Activated B cell treated with CpG ODN at 0.5 μM for 24 hours (primary cell): ENCODE measurements at regions of chr7 and their contacts with region 1.

Region 1: DNA sequence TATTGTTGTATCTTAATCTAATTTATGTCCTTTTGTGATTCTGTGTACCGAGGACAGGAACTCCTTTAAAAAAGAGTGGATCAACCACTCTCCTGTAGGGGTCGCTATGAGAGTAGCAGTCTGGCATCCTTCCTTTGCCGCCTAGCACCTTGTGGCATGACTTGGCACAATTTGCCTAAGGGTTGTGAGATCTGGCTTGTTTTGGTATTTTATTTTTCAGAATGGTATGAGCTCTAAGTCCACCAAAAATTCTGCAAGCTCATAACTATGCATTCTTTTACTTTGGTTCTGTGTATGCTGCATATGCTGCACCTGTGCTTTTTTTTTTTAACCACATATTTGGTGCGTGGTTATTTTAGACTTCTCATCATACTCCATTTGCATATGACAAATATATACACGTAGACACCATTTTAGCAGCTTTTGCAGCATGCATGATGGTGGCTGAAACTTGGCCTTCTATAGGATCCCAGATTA is 112.8 kb downstream of the CDK14 start:
- DNase-seq: no peak
- ATAC-seq: peak; percentile 40
- H3K4me3 Mint-ChIP-seq: peak overlapping the region; percentile 86
- H3K27ac Mint-ChIP-seq: peak overlapping the region; percentile 96
- H3K4me1 Mint-ChIP-seq: peaks cover 81% of the 10 kb centered on the region
- H3K27me3 Mint-ChIP-seq: no peaks in the 10 kb centered on the region
- CTCF ChIP-seq: no peak

Region 2: GRCh38 chr7:90552521-90552920 is 156.4 kb before region 1 on chr7:
- CTCF ChIA-PET with region 1: no interaction called
- POLR2A ChIA-PET with region 1: no interaction called
- intact Hi-C with region 1: loop called (anchors 5 kb)
- DNase-seq: no peak
- ATAC-seq: peak; percentile 34
- H3K4me3 Mint-ChIP-seq: no peak overlapping the region
- H3K27ac Mint-ChIP-seq: no peak overlapping the region
- H3K4me1 Mint-ChIP-seq: peaks cover 3% of the 10 kb centered on the region
- H3K27me3 Mint-ChIP-seq: peaks cover 3% of the 10 kb centered on the region
- CTCF ChIP-seq: no peak

Region 3: GRCh38 chr7:90720984-90721760 is 12.3 kb after region 1 on chr7:
- CTCF ChIA-PET with region 1: interaction called, 11 read pairs
- POLR2A ChIA-PET with region 1: interaction called, 22 read pairs
- intact Hi-C with region 1: loop called (anchors 1 kb)
- DNase-seq: no peak
- ATAC-seq: peak; percentile 43
- H3K4me3 Mint-ChIP-seq: no peak overlapping the region
- H3K27ac Mint-ChIP-seq: peak overlapping the region; percentile 70
- H3K4me1 Mint-ChIP-seq: peaks cover 88% of the 10 kb centered on the region
- H3K27me3 Mint-ChIP-seq: no peaks in the 10 kb centered on the region
- CTCF ChIP-seq: no peak

Region 4: DNA sequence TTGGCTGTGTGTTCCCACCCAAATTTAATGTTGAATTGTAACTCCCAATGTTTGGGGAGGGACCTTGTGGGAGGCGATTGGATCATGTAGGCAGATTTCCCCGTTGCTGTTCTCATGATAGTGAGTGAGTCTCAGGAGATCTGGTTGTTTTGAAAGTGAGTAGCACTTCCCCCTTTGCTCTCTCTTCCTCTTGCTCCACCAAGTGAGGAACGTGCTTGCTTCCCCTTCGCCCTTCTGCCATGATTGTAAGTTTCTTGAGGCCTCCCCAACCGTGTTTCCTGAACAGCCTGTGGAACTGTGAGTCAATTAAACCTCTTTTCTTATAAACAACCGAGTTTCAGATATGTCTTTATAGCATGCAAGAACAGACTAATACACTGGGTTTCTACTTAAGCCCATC is 63.5 kb after region 1 on chr7:
- CTCF ChIA-PET with region 1: interaction called, 4 read pairs
- POLR2A ChIA-PET with region 1: no interaction called
- intact Hi-C with region 1: loop called (anchors 1 kb)
- DNase-seq: peak; percentile 30
- ATAC-seq: peak; percentile 91
- H3K4me3 Mint-ChIP-seq: peak overlapping the region; percentile 36
- H3K27ac Mint-ChIP-seq: peak overlapping the region; percentile 89
- H3K4me1 Mint-ChIP-seq: peaks cover 37% of the 10 kb centered on the region
- H3K27me3 Mint-ChIP-seq: no peaks in the 10 kb centered on the region
- CTCF ChIP-seq: no peak

Region 5: DNA sequence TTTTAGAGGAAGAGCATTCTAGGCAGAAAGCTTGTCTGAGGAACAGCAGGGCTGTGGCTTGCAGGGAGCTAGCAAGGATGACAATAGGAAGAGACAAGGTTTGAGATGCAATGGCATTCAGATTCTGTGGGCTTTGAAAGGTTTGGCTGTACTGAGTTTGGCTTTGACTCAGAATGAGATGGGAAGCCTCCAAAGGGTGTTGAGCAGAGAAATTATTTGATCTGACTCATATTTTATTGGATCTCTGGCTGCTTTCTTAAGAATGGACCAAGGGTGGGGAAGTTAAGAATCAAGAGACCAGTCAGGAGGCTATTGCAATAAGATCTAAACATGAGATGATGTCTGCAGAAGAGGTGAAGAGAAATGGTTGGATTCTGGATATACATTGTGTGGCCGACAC is 160.5 kb after region 1 on chr7:
- CTCF ChIA-PET with region 1: no interaction called
- POLR2A ChIA-PET with region 1: no interaction called
- intact Hi-C with region 1: no loop called
- DNase-seq: no peak
- ATAC-seq: no peak
- H3K4me3 Mint-ChIP-seq: no peak overlapping the region
- H3K27ac Mint-ChIP-seq: no peak overlapping the region
- H3K4me1 Mint-ChIP-seq: peaks cover 2% of the 10 kb centered on the region
- H3K27me3 Mint-ChIP-seq: no peaks in the 10 kb centered on the region
- CTCF ChIP-seq: no peak

Region 6: DNA sequence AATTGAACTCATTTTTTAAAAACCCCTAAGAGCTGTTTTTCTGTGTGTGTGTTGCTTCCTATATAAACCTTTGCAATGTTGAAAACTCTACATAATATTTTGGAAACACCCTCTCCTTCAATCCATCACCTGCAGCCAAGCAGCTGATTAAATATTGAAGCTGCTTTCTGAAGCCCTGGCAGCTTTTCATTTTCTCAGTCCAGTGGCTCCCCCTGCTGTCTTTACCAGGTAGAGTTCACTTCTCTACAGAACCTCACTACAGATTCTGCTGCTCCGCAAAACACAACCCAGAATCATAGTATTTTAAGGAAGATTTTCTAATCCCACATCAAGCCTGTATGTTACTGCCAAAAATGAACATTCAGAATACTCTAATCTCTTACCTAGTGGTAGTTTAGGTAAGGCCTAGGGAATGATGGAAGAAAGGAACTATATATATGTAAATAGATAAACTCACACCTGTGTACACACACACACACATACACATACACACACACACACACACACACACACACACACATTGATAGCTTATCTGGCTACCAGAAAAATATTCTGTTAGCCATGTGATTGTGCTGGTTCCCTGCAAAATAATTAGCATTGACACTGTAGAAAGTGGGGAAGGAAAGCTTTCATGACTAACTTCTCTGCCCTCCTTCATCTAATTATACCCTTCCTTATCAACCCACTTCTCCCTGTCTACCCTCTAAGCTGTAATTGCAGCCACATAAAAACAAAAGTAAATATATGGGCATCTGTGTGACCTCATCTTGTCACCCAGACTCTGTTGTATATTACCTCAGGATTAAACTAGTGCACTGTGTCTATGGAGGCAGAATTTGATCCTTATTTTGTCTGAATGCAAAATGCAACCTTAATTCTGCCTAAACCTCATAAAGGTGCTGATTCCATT is 325.8 kb after region 1 on chr7:
- CTCF ChIA-PET with region 1: interaction called, 59 read pairs
- POLR2A ChIA-PET with region 1: interaction called, 5 read pairs
- intact Hi-C with region 1: loop called (anchors 1 kb)
- DNase-seq: no peak
- ATAC-seq: peak; percentile 61
- H3K4me3 Mint-ChIP-seq: no peak overlapping the region
- H3K27ac Mint-ChIP-seq: no peak overlapping the region
- H3K4me1 Mint-ChIP-seq: peaks cover 5% of the 10 kb centered on the region
- H3K27me3 Mint-ChIP-seq: no peaks in the 10 kb centered on the region
- CTCF ChIP-seq: no peak

Region 7: DNA sequence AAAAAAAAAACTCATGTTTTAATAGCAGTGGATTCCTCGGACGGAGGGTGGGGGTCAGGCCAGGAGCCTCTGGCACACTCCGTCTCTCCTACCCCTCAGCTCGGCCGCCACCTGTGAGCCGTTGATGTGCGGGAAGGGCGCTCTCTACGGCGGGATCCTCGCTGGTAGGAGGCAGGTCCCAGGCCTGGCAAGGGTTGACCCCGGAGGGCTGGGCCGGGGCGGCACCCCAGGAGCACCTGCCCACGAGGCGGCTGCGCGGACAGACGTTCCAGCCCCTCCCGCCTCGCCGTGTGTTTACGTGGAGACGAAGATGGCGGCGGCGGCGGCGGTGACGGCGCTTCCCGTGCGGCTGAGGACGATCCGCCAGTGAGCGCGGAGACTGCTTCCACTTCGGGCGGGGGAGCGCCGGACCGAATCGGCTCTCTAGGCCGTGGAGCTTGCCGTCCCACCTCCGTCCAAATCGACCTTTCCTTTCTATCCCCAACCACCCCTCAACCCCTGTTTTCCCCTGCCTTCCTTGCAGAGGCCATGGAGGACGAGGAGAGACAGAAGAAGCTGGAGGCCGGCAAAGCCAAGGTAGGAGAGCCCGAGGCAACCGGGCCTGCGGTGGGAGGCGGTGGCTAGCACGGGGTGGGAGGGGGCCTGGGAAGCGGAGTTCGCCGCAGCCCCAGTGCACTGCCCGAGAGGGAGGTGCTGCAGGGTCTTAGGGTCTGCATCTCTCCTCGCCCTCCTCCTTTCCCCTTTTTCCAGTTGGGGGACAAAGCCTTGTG is 1231.9 kb after region 1 on chr7 and contains the start of gene AKAP9:
- CTCF ChIA-PET with region 1: interaction called, 3 read pairs
- POLR2A ChIA-PET with region 1: no interaction called
- intact Hi-C with region 1: loop called (anchors 5 kb)
- DNase-seq: peak; percentile 85
- ATAC-seq: peak; percentile 91
- H3K4me3 Mint-ChIP-seq: peak within 1 kb of the TSS; percentile 94
- H3K27ac Mint-ChIP-seq: peak within 1 kb of the TSS; percentile 93
- H3K4me1 Mint-ChIP-seq: peaks cover 42% of the 10 kb centered on the region
- H3K27me3 Mint-ChIP-seq: no peaks in the 10 kb centered on the region
- CTCF ChIP-seq: no peak
- total RNA-seq, gene AKAP9: 54.4 and 58.4 TPM in 2 replicates